ENCODE measurements at regions of chr21 and their contacts with region 1.

Region 1: DNA sequence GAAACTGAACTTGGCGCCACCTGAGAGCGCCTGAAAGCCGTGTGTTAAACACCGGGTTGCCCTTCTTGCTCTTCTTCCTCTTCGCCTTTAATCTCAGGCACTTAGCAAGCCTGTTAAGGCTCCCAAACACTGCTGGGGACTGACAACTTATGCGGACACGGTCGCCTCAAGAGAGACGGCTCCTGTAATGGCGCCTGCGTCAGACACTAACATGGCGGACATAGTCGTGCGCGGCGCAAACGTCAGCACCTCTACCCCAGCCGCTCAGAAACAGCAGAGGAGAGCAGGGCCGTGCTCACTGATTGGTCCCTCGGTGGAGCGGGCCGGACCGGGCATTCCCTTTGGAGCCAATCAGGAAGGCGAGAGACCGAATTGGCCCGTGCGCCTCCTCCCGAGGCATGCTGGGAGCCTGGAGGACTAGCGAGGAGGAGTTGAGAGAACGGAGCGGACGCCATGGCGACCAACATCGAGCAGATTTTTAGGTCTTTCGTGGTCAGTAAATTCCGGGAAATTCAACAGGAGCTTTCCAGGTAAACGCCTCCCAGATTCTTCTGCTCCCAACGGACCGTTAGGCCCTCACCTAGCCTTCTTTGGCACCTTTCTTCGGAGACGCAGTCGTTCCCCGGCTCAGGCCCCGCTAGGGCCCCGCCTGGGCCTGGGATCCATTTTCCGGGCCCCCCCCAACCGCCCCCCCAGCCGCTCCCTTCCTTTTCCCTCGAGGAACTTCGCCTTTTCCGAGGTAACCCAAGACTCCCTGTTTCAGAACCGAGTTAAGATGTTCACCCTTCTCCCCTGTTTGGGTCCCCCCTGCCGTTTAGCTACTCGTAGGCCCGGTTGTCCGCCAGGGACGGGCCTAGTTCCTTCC is at the start of gene SON:
- DNase-seq: peak; percentile 98
- H3K4me3 Mint-ChIP-seq: peak within 1 kb of the TSS; percentile 93
- H3K27ac Mint-ChIP-seq: peak within 1 kb of the TSS; percentile 99
- H3K4me1 Mint-ChIP-seq: peaks cover 43% of the 10 kb centered on the region
- H3K27me3 Mint-ChIP-seq: no peaks in the 10 kb centered on the region
- total RNA-seq, gene SON: 342 and 361 TPM in 2 replicates

Region 2: GRCh38 chr21:32278518-32279376 is 1264.1 kb before region 1 on chr21 and contains the start of gene MIS18A:
- intact Hi-C with region 1: loop called (anchors 2 kb)
- DNase-seq: peak; percentile 95
- H3K4me3 Mint-ChIP-seq: peak within 1 kb of the TSS; percentile 100
- H3K27ac Mint-ChIP-seq: peak within 1 kb of the TSS; percentile 97
- H3K4me1 Mint-ChIP-seq: peaks cover 21% of the 10 kb centered on the region
- H3K27me3 Mint-ChIP-seq: no peaks in the 10 kb centered on the region
- total RNA-seq, gene MIS18A: 26.8 and 27.5 TPM in 2 replicates

Region 3: DNA sequence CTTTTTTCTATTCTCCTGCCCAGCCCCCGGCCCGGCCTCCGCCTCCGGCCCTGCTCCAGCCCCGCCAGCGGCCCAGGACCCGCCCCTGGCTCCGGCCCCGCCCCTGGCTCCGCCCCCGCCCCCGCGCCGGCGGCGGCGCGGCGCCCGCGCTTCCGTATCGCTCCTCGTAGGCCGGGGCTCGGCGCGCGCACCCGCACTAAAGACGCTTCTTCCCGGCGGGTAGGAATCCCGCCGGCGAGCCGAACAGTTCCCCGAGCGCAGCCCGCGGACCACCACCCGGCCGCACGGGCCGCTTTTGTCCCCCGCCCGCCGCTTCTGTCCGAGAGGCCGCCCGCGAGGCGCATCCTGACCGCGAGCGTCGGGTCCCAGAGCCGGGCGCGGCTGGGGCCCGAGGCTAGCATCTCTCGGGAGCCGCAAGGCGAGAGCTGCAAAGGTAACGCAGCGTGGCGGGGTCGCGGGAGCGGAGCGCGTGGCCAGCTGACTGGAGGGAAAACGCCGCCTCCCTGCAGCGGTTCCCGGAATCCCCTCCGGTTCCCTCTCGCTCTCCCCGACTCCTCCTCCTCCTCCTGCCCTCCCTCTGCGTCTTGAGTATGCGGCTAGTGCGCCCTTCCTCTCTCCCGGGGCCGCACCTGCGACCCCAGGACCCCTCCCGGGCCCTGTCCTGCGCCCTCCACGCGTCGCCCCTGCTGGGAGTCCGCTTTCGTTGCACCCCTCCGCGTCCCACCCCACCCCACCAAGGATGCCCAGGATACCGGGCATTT is 312.9 kb before region 1 on chr21 and contains the start of gene IFNAR2:
- intact Hi-C with region 1: loop called (anchors 2 kb)
- DNase-seq: peak; percentile 68
- H3K4me3 Mint-ChIP-seq: peak within 1 kb of the TSS; percentile 88
- H3K27ac Mint-ChIP-seq: peak within 1 kb of the TSS; percentile 87
- H3K4me1 Mint-ChIP-seq: peaks cover 49% of the 10 kb centered on the region
- H3K27me3 Mint-ChIP-seq: peaks cover 5% of the 10 kb centered on the region
- total RNA-seq, gene IFNAR2: 33.3 and 33.5 TPM in 2 replicates

Region 4: GRCh38 chr21:33491373-33492102 is 51.3 kb before region 1 on chr21 and contains the start of gene DNAJC28:
- intact Hi-C with region 1: loop called (anchors 1 kb)
- DNase-seq: peak; percentile 91
- H3K4me3 Mint-ChIP-seq: peak within 1 kb of the TSS; percentile 84
- H3K27ac Mint-ChIP-seq: peak within 1 kb of the TSS; percentile 74
- H3K4me1 Mint-ChIP-seq: peaks cover 11% of the 10 kb centered on the region
- H3K27me3 Mint-ChIP-seq: peaks cover 12% of the 10 kb centered on the region
- total RNA-seq, gene DNAJC28: 0.12 and 0.18 TPM in 2 replicates

Region 5: GRCh38 chr21:33588485-33589335 is 45.8 kb after region 1 on chr21 and contains the start of gene DONSON:
- intact Hi-C with region 1: loop called (anchors 1 kb)
- DNase-seq: peak; percentile 90
- H3K4me3 Mint-ChIP-seq: peak within 1 kb of the TSS; percentile 92
- H3K27ac Mint-ChIP-seq: peak within 1 kb of the TSS; percentile 84
- H3K4me1 Mint-ChIP-seq: peaks cover 31% of the 10 kb centered on the region
- H3K27me3 Mint-ChIP-seq: no peaks in the 10 kb centered on the region
- total RNA-seq, gene DONSON: 37.5 and 38.7 TPM in 2 replicates

Measured in activated T-helper 1 cell treated with anti-CD3 and anti-CD28 coated beads, Interleukin-12 subunit alpha, Interleukin-12 subunit beta, Interleukin-2, Interleukin-4 antibody, amounts not matched to agents 30 ng/mL and 10 ng/mL and 1 ng/mL, durations not matched to agents 14 hours and 24 hours and 36 hours (primary cell).